ENCODE measurements at regions of chr4 and their contacts with region 1.

Region 1: GRCh38 chr4:55866973-55867574 is 13.6 kb downstream of the EXOC1 start:
- DNase-seq: no peak
- ATAC-seq: peak; percentile 84
- H3K4me3 Mint-ChIP-seq: no peak overlapping the region
- H3K27ac Mint-ChIP-seq: peak overlapping the region; percentile 62
- H3K4me1 Mint-ChIP-seq: peaks cover 26% of the 10 kb centered on the region
- H3K27me3 Mint-ChIP-seq: no peaks in the 10 kb centered on the region

Region 2: GRCh38 chr4:55722132-55722531 is 144.9 kb before region 1 on chr4:
- CTCF ChIA-PET with region 1: no interaction called
- DNase-seq: no peak
- ATAC-seq: no peak
- H3K4me3 Mint-ChIP-seq: no peak overlapping the region
- H3K27ac Mint-ChIP-seq: no peak overlapping the region
- H3K4me1 Mint-ChIP-seq: no peaks in the 10 kb centered on the region
- H3K27me3 Mint-ChIP-seq: peaks cover 2% of the 10 kb centered on the region

Region 3: GRCh38 chr4:55853484-55854046 is 13.5 kb before region 1 on chr4 and contains the start of gene EXOC1:
- CTCF ChIA-PET with region 1: interaction called, 25 read pairs
- DNase-seq: peak; percentile 98
- ATAC-seq: peak; percentile 97
- H3K4me3 Mint-ChIP-seq: no peak within 1 kb of the TSS
- H3K27ac Mint-ChIP-seq: peak within 1 kb of the TSS; percentile 88
- H3K4me1 Mint-ChIP-seq: peaks cover 26% of the 10 kb centered on the region
- H3K27me3 Mint-ChIP-seq: no peaks in the 10 kb centered on the region
- total RNA-seq, gene EXOC1: 24.2 to 26.9 TPM